Dorsolateral prefrontal cortex (tissue), 120 donors: ENCODE measurements at regions of chr17 and their contacts with region 1.

Region 1: GRCh38 chr17:47720754-47721533 is 12.1 kb upstream of the TBX21 start:
- DNase-seq: no peak
- H3K4me3 ChIP-seq: no peak overlapping the region
- H3K27ac ChIP-seq: no peak overlapping the region
- H3K27me3 ChIP-seq: peaks cover 0 to 70% (median 40%) of the 10 kb centered on the region in 45 donors
- CTCF ChIP-seq: no peak

Region 2: GRCh38 chr17:47742319-47743181 is 21.6 kb after region 1 on chr17:
- intact Hi-C with region 1: no loop called
- DNase-seq: no peak
- H3K4me3 ChIP-seq: no peak overlapping the region
- H3K27ac ChIP-seq: no peak overlapping the region
- H3K27me3 ChIP-seq: peaks cover 0 to 69% (median 25%) of the 10 kb centered on the region in 45 donors
- CTCF ChIP-seq: peak in 49 of 56 donors; percentile 16 to 63 (median 40)

Region 3: DNA sequence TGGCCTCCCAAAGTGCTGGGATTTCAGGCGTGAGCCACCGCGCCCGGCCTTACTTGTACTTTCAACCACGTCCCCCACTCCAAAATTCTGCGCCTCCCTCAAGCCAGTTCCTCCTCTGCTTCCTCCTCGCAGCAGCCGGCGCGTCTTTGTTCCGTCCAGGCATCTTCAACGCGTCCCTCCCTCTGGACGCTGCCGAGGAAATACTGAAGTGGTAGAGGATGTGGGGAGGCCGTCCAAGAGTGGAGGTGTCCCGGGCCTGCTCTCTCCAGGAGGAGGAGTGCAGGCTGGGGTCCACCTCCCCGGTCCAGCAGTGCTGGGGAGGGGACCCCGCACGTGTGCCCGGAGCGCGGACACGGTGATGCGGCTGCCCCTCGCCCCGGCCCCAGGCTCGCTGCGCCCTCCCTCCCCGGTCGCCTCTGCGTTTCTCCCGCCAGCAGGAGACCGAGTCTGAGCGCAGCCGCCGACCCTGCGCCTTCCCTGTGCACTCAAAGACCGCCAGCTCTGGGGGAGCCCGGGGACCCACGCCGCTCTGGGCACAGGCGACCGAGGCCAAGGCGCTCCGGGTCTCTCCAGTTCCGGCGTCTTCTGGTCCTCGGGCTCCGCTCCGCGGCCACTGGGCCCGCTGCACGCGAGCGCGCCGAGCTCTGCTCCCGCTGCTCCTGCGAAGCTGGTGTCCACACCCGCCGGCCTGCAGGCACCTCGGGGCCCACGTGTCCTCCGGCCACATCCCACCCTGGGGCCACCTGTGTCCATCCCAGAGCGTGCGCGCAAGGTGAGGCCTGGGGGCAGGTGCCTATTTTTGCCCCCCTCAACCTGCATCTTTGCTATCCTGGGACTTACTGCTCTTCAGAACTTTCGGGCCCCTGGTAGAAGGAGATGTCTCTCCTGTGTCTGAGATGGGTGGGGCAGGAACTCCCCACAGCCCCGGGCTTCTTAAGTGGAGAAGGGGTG is 68.9 kb after region 1 on chr17:
- intact Hi-C with region 1: loop called in 1 of 2 experiments (anchors 10 kb)
- DNase-seq: peak in 8 of 10 donors; percentile 17 to 75 (median 43)
- H3K4me3 ChIP-seq: peak overlapping the region; percentile 11 to 70 (median 50)
- H3K27ac ChIP-seq: no peak overlapping the region
- H3K27me3 ChIP-seq: peaks cover 0 to 81% (median 48%) of the 10 kb centered on the region in 45 donors
- CTCF ChIP-seq: peak in 50 of 56 donors; percentile 26 to 68 (median 48)